ENCODE measurements at regions of chr1 and their contacts with region 1.

Region 1: GRCh38 chr1:11214698-11215380 is 25.7 kb downstream of the ANGPTL7 start:
- DNase-seq: no peak
- H3K4me3 ChIP-seq: no peak overlapping the region
- CTCF ChIP-seq: no peak

Region 2: GRCh38 chr1:11059990-11060830 is 154.6 kb before region 1 on chr1 and contains the start of gene SRM:
- in situ Hi-C with region 1: loop called (anchors 5 kb)
- DNase-seq: peak; percentile 65
- H3K4me3 ChIP-seq: peak within 1 kb of the TSS; percentile 84
- CTCF ChIP-seq: no peak

Region 3: DNA sequence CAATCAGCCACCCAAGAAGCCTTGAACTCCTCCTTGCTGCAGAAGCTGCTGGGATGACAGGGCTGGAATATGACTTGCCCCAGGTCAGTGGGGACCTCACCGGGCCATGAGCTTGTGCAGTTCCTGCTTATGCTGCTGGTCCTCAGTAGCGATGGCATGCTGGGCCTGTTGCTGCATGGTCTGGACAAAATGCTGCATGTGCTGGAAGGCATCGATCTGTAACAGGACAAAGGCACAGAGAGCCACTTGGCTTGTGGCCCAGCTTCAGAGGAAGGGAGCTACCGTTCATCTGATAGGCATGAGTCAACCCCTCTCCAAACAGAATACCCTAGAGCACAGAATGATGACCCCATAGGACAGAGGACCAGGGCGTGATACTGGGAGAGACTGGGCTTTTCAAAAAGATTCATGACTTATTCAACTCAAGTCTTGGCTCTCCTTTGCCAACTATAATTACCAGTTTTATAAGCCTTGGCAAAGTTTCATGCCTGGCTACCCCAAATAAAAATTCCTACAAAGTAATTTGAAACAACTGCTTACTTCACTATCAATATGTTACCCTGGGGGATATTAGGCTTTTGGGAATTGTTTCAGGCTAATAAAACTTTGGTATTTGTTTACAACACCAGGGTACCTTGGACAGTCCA is 80.5 kb before region 1 on chr1:
- in situ Hi-C with region 1: no loop called
- DNase-seq: no peak
- H3K4me3 ChIP-seq: no peak overlapping the region
- CTCF ChIP-seq: no peak